Astrocyte of the cerebellum (primary cell): ENCODE measurements at regions of chr10 and their contacts with region 1.

Region 1: GRCh38 chr10:118966076-118966849 is 63.3 kb upstream of the NANOS1 start:
- DNase-seq: no peak
- H3K4me3 ChIP-seq: no peak overlapping the region
- CTCF ChIP-seq: no peak

Region 2: DNA sequence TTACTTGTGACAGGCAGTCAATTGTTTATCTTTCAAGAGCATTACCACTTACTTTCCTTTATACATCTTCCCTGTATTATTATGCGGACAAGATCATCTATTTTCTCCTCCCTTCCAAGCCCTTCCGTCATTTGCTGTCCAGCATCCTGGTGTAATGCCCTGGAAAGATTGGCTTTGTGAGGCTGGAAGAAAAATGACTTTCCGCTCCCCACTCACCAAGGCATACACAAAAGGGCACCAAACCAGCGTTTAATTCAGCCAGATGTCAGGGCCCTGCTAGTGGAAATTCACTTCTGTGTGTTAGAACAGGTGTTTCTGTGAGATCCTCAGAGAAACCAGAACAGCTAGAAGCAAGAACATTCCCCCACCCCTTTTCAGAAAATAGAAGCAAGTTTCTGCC is 64.9 kb before region 1 on chr10:
- in situ Hi-C with region 1: loop called (anchors 5 kb)
- DNase-seq: no peak
- H3K4me3 ChIP-seq: no peak overlapping the region
- CTCF ChIP-seq: no peak